Left cardiac atrium (tissue), 4 donors: ENCODE measurements at regions of chr15 and their contacts with region 1.

Region 1: GRCh38 chr15:75903331-75904239 is at the start of gene FBXO22:
- DNase-seq: peak; percentile 93
- ATAC-seq: peak; percentile 99 to 100
- total RNA-seq, gene FBXO22: 16.6 to 17.3 TPM

Region 2: GRCh38 chr15:75844629-75845335 is 58.8 kb before region 1 on chr15:
- intact Hi-C with region 1: loop called in 1 of 2 experiments (anchors 5 kb)
- DNase-seq: no peak
- ATAC-seq: no peak